ENCODE measurements at regions of chr16 and their contacts with region 1.

Region 1: DNA sequence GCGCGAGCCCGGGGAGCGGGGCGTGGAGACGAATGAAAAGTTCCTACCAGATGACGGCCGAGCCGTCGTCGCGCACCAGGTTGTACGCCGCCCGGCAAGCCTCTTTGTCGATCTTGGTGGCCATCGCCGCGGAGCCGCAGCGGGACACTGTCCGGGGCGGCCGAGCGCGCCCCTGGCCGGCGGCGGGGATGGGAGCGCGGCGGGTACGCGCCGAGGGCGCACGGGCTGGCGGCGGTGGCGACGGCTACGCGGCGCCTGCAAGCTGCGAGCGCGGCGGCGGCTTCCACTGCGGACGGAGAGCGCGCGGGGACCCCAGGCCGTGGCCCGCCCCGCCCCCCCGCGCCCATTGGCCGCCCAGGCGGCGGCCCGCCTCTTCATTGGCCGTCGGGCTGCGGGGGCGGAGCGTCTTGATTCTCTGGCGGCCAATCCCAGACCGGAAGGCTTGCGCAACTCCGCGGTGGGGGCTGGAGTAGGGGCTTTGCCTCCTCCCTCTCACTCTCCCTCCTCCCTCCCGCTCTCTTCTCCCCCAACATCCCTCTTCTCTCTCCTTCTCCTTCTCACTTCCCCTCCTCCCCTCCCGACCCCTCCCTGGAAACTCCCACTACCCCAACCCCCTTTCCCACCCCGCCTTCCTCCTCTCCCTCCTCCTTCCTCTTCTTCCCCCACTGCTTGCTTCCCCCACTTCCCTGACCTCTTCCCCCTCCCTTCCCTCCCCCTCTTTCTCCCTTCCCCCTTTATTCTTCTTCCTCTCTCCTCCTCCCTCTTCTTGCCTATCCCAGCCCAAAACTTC is at the start of gene COTL1:
- DNase-seq: peak; percentile 91 to 94 (median 91)
- H3K4me3 ChIP-seq: peak within 1 kb of the TSS; percentile 71 to 91
- H3K4me3 Mint-ChIP-seq: peak within 1 kb of the TSS; percentile 95 to 97 (median 96)
- H3K27ac ChIP-seq: peak within 1 kb of the TSS; percentile 64
- H3K27ac Mint-ChIP-seq: peak within 1 kb of the TSS; percentile 90 to 97 (median 94)
- H3K4me1 ChIP-seq: peaks cover 39% of the 10 kb centered on the region
- H3K4me1 Mint-ChIP-seq: peaks cover 35 to 53% (median 45%) of the 10 kb centered on the region in 4 donors
- H3K27me3 ChIP-seq: no peaks in the 10 kb centered on the region
- H3K27me3 Mint-ChIP-seq: no peaks in the 10 kb centered on the region
- total RNA-seq, gene COTL1: 181 to 186 TPM

Region 2: DNA sequence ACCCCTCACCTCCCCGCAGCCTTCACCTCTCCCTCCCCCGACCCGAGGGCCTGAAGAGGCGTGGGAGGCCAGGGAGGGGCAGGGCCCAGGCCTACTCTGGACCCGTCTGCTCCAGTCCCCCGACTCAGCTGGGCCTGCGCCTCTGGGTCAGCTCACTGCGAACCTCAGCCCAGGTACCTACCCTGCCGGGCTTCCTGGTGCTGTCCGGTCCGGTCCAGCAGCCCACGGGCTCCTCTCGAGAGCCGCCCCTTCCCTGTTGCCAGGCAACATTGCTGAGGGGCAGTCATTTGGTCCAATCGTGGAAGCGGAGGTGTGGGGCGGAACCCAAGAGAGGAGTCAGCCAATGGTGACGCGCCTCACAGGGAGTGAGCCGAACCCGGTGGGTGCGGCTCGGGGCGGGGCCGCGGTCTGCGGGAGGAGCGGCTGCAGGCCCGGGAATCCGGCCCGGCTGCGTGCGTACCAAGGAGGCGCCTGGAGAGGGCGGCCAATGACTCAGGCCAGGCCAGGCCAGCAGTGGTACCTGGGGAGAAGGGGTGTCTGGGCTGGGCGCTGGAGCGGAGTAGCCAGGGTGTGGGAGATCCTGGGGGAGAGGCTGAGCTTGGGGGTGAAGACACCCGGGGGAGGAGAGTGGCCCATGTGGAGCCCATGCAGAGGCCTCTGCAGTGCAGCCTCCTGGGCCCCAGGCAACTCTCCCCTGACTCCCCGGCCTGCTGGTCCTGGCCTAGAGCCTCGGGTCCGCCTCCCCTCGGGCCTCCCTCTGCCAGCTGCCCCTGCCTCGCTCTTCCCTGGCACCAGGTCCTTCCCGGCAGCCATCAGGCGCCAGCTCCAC is 113.4 kb before region 1 on chr16 and contains the start of gene MEAK7:
- CTCF ChIA-PET with region 1: interaction called, 358 read pairs
- POLR2A ChIA-PET with region 1: interaction called, 113 read pairs
- intact Hi-C with region 1: no loop called
- DNase-seq: peak; percentile 95 to 98 (median 96)
- H3K4me3 ChIP-seq: peak within 1 kb of the TSS; percentile 84 to 85
- H3K4me3 Mint-ChIP-seq: peak within 1 kb of the TSS; percentile 87 to 94 (median 91)
- H3K27ac ChIP-seq: peak within 1 kb of the TSS; percentile 74
- H3K27ac Mint-ChIP-seq: peak within 1 kb of the TSS; percentile 80 to 92 (median 88)
- H3K4me1 ChIP-seq: peaks cover 55% of the 10 kb centered on the region
- H3K4me1 Mint-ChIP-seq: peaks cover 33 to 56% (median 44%) of the 10 kb centered on the region in 4 donors
- H3K27me3 ChIP-seq: no peaks in the 10 kb centered on the region
- H3K27me3 Mint-ChIP-seq: no peaks in the 10 kb centered on the region
- total RNA-seq, gene MEAK7: 13.6 to 16.8 TPM

Region 3: DNA sequence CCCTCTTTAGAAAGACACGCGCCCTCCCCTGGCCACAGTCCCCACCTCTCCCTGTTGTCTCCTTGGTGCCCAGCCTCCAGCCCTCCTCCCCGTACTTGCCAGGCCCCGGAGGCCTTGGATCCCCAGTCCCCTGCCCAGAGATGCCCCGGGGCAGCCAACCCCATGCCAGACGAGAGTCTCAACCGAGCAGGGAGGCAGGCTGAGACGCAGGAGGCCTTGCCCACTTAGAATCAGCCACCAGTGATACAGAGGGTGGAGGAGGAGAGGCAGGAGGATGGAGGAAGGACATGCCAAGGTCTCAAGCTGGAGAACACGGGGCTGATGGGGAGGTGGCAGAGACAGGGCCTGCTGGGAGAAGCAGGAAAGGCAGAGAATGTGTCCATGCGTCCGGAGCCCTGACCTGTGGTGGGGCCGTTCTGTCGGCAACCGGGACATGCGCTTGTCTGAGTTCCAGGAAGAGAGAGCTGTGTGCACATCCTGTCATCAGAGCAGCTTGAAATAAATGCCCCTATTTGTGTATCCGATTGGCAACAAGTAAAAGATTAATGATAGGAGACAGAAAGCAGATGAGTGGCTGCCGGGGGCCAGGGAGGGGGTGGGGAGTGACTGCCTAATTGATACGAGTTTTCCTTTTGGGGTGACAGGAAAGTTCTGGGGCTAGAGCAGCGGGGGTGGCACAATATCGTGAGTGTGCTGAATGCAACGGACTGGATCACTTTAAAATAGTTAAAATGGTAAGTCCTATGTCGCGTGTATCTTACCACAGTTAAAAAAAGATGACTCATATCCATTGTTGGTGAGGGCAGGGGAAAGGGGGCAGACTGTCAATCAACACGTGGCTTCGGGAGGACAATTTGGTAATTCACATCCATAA is 68.8 kb before region 1 on chr16:
- CTCF ChIA-PET with region 1: interaction called, 13 read pairs
- POLR2A ChIA-PET with region 1: interaction called, 88 read pairs
- intact Hi-C with region 1: loop called (anchors 1 kb)
- DNase-seq: peak; percentile 63 to 74 (median 70)
- H3K4me3 ChIP-seq: peak overlapping the region; percentile 49 to 60
- H3K4me3 Mint-ChIP-seq: peak overlapping the region; percentile 84 to 96 (median 91)
- H3K27ac ChIP-seq: peak overlapping the region; percentile 81
- H3K27ac Mint-ChIP-seq: peak overlapping the region; percentile 91 to 99 (median 97)
- H3K4me1 ChIP-seq: peaks cover 78% of the 10 kb centered on the region
- H3K4me1 Mint-ChIP-seq: peaks cover 51 to 77% (median 63%) of the 10 kb centered on the region in 4 donors
- H3K27me3 ChIP-seq: no peaks in the 10 kb centered on the region
- H3K27me3 Mint-ChIP-seq: no peaks in the 10 kb centered on the region

Region 4: DNA sequence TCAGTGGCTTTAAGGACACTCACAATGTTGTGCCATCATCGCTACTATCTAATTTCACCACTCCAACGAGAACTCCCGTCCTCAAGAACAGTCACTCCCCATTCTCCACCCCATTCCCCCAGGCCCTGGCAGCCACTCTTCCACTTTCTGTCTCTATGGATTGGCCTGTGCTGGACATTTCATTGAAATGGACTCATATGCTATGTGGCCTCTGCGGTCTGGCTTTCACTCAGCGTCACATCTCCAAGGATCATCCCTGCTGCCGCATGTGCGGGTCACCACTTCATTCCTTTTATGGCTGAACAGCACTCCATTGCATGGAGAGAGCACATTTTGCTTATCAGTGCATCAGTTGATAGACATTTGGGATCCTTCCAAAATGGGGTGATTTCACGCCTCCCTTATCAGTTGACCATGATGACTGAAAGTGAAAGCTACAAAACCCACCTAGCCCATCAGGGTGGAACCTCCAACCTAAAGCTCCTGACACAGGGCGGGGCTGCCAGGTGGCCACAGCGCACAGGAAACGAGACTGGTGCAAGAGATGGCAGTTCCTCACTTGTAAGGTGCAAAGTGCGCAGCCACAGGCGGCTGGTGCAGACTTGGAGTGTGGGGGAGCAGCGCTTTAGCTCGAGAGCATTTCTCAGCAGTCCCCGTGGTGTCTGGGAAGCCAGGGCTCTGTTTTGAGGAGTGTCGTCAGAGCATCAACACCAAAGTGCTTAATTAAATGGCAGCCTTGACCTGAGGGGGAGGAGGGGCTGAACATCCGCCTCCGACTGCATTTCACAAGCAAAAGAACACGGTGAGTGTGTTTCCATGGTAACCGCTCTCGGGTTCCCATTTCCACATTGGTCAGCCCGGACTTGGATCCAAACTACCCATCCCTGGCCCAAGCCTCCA is 23.9 kb before region 1 on chr16:
- CTCF ChIA-PET with region 1: interaction called, 45 read pairs
- POLR2A ChIA-PET with region 1: interaction called, 530 read pairs
- intact Hi-C with region 1: loop called (anchors 1 kb)
- DNase-seq: peak; percentile 83 to 95 (median 85)
- H3K4me3 ChIP-seq: peak overlapping the region; percentile 62 to 64
- H3K4me3 Mint-ChIP-seq: peak overlapping the region; percentile 88 to 93 (median 90)
- H3K27ac ChIP-seq: peak overlapping the region; percentile 81
- H3K27ac Mint-ChIP-seq: peak overlapping the region; percentile 95 to 99 (median 98)
- H3K4me1 ChIP-seq: peaks cover 70% of the 10 kb centered on the region
- H3K4me1 Mint-ChIP-seq: peaks cover 47 to 73% (median 65%) of the 10 kb centered on the region in 4 donors
- H3K27me3 ChIP-seq: no peaks in the 10 kb centered on the region
- H3K27me3 Mint-ChIP-seq: no peaks in the 10 kb centered on the region

Region 5: GRCh38 chr16:84635699-84636098 is 17.7 kb after region 1 on chr16:
- CTCF ChIA-PET with region 1: interaction called, 3 read pairs
- POLR2A ChIA-PET with region 1: no interaction called
- intact Hi-C with region 1: loop called (anchors 1 kb)
- DNase-seq: no peak
- H3K4me3 ChIP-seq: no peak overlapping the region
- H3K4me3 Mint-ChIP-seq: no peak overlapping the region
- H3K27ac ChIP-seq: no peak overlapping the region
- H3K27ac Mint-ChIP-seq: peak overlapping the region in 1 of 7 donors; percentile 42
- H3K4me1 ChIP-seq: peaks cover 18% of the 10 kb centered on the region
- H3K4me1 Mint-ChIP-seq: peaks cover 16 to 38% (median 22%) of the 10 kb centered on the region in 4 donors
- H3K27me3 ChIP-seq: no peaks in the 10 kb centered on the region
- H3K27me3 Mint-ChIP-seq: no peaks in the 10 kb centered on the region

Region 6: DNA sequence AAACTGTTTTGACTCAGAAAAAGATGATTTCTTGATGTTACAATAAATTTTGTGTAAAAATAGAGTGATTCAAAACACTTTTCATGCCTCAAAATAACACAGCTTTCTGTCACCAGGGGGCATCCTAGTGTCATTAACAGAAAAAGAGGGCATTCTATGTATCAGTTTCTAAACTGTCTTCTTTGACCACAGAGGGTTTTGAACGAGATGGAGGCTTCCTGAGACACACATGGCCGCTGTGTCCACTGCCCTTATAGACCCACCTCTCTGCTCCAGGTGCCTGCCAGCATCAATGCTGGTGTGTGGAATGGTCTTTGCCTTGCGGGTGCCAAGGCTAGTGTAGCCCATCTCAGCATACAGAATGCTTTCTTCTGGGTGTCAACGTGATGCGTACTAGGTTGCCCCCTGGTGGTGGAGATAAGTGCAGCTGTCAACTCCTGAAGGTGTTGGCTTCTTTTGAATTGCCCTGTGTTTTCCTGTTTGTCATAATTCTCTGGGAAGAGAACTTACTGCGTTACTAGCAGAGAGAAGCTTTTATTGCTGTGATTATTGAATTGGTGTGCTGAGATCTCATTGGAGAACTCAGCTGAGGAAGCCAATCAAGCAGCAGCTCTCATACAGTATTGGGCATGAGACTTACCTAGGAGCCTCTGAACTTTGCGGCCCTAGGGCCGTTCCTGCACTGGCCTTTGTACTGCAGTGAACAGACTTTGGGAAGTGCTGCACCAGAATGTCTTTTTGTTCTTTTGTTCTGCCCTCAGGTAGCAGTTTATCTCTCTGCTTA is 120.5 kb after region 1 on chr16:
- CTCF ChIA-PET with region 1: interaction called, 38 read pairs
- POLR2A ChIA-PET with region 1: no interaction called
- intact Hi-C with region 1: loop called (anchors 1 kb)
- DNase-seq: peak; percentile 75 to 82 (median 78)
- H3K4me3 ChIP-seq: no peak overlapping the region
- H3K4me3 Mint-ChIP-seq: peak overlapping the region; percentile 27 to 80 (median 64)
- H3K27ac ChIP-seq: no peak overlapping the region
- H3K27ac Mint-ChIP-seq: peak overlapping the region; percentile 2 to 87 (median 80)
- H3K4me1 ChIP-seq: peaks cover 33% of the 10 kb centered on the region
- H3K4me1 Mint-ChIP-seq: peaks cover 36 to 53% (median 43%) of the 10 kb centered on the region in 4 donors
- H3K27me3 ChIP-seq: no peaks in the 10 kb centered on the region
- H3K27me3 Mint-ChIP-seq: no peaks in the 10 kb centered on the region

Region 7: DNA sequence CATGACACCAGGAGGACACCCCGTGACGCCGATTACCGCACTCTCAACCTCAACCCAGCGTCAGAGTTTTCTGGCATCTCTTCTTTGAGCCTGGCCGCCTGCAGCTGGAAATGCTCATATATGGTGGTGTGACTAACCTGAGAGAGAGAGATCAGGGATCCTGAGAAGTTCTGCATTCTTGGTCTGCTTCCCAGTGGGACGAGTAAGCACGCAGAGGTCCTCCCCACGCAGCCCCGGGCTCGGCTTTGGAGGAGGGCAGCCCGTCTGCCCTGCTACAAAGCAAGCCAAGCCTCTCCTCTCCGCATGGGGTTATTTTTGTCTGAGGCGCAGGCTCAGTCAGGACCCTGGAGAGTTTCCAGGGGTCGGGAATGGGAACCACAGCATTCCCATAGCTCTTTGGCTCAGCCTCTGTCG is 218.3 kb after region 1 on chr16:
- CTCF ChIA-PET with region 1: no interaction called
- POLR2A ChIA-PET with region 1: no interaction called
- intact Hi-C with region 1: no loop called
- DNase-seq: no peak
- H3K4me3 ChIP-seq: no peak overlapping the region
- H3K4me3 Mint-ChIP-seq: no peak overlapping the region
- H3K27ac ChIP-seq: no peak overlapping the region
- H3K27ac Mint-ChIP-seq: no peak overlapping the region
- H3K4me1 ChIP-seq: no peaks in the 10 kb centered on the region
- H3K4me1 Mint-ChIP-seq: peaks cover 0 to 4% (median 1%) of the 10 kb centered on the region in 4 donors
- H3K27me3 ChIP-seq: no peaks in the 10 kb centered on the region
- H3K27me3 Mint-ChIP-seq: peaks cover 5 to 16% of the 10 kb centered on the region in 2 donors

Measured in CD4-positive, alpha-beta memory T cell (primary cell).